GM12878 (cell line): ENCODE measurements at regions of chr11 and their contacts with region 1.

Region 1: GRCh38 chr11:65540297-65541092 is 15.6 kb downstream of the SCYL1 start:
- DNase-seq: peak; percentile 71
- ATAC-seq: peak; percentile 95
- H3K4me3 ChIP-seq: peak overlapping the region; percentile 72
- H3K27ac ChIP-seq: peak overlapping the region; percentile 61
- H3K4me1 ChIP-seq: peaks cover 6% of the 10 kb centered on the region
- H3K27me3 ChIP-seq: no peaks in the 10 kb centered on the region
- CTCF ChIP-seq: peak; percentile 82 to 91 (median 82)
- EP300 ChIP-seq: no peak
- POLR2A ChIP-seq: peak; percentile 81
- RAD21 ChIP-seq: peak; percentile 74

Region 2: DNA sequence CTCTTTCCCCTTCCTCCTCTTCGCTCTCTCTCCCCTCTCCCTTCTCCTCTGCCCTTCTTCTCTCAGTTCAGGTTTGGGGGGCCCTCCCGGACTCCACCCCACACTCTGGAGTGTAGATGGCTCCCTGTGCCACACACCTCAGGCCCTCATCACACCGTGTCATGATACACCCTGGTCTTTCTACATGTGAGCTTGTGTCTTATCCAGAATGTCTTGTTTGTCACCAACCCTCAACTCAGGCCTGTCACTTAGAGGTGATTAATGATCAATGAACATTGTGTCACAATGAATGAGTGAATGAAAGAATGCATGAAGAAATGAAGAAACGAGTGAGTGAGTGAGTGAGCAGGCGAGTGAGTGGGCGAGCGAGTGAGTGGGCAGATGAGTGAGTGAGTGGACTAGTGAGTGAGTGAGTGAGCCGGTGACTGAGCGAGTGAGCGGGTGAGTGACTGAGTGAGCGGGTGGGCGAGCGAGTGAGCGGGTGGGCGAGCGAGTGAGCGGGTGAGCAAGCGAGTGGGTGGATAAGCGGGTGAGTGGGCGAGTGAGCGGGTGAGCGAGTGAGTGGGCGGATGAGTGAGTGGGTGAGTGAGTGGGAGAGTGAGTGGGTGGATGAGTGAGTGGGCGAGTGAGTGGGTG is 324.9 kb before region 1 on chr11:
- CTCF ChIA-PET with region 1: no interaction called
- POLR2A ChIA-PET with region 1: no interaction called
- RAD21 ChIA-PET with region 1: no interaction called
- SMC1A ChIA-PET with region 1: no interaction called
- in situ Hi-C with region 1: no loop called
- intact Hi-C with region 1: no loop called
- DNase-seq: no peak
- ATAC-seq: no peak
- H3K4me3 ChIP-seq: no peak overlapping the region
- H3K27ac ChIP-seq: no peak overlapping the region
- H3K4me1 ChIP-seq: peaks cover 7% of the 10 kb centered on the region
- H3K27me3 ChIP-seq: no peaks in the 10 kb centered on the region
- CTCF ChIP-seq: no peak
- EP300 ChIP-seq: no peak
- POLR2A ChIP-seq: no peak
- RAD21 ChIP-seq: no peak

Region 3: GRCh38 chr11:65524741-65525545 is 15.6 kb before region 1 on chr11 and contains the start of gene SCYL1:
- CTCF ChIA-PET with region 1: interaction called, 18 read pairs
- POLR2A ChIA-PET with region 1: interaction called, 13 read pairs
- RAD21 ChIA-PET with region 1: interaction called, 6 read pairs
- SMC1A ChIA-PET with region 1: interaction called, 7 read pairs
- in situ Hi-C with region 1: no loop called
- intact Hi-C with region 1: no loop called
- DNase-seq: no peak
- ATAC-seq: peak; percentile 86
- H3K4me3 ChIP-seq: peak within 1 kb of the TSS; percentile 85
- H3K27ac ChIP-seq: peak within 1 kb of the TSS; percentile 54
- H3K4me1 ChIP-seq: peaks cover 25% of the 10 kb centered on the region
- H3K27me3 ChIP-seq: no peaks in the 10 kb centered on the region
- CTCF ChIP-seq: no peak
- EP300 ChIP-seq: no peak
- POLR2A ChIP-seq: peak; percentile 74
- RAD21 ChIP-seq: no peak
- polyA plus RNA-seq, gene SCYL1: 0.80 to 6.3 TPM

Region 4: DNA sequence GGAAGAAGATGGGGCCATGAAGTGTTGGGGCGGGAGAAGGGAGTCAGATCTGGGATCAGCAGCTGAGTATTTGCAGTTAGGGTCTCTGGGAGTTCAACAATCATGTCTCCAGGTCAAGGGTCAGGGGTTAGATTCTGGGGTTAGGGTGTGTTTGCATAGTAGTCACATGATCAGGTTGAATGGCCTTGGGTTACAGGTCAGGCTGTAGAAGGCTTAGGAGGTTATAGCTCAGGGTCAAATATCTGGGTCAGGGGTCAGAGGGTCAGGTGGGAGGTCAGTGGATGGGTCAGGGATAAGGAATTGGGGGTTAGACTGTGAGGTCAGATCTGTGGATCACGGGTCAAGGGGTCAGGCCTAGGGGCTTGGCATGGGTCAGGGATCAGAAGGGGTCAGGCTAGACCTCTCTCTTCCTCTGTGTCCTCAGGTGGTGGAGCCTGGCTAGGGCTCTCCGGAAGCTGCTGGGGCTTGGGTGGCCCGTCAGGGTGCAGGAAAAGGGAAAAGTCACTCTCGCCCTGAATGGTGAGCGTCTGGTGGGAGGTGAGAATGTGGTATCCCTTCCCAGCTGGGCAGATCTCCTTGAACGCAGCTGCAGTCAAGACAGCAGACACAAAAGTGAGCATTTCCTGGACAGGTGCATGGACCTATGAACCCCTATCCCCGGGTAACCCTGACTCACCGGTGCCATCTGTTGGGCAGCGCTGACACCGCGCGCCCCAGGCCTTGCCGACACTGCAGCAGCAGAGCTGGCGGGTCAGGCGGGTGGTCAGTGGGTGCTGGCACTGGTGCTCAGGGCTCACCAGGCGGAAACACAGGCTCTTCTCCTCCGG is 11.3 kb after region 1 on chr11:
- CTCF ChIA-PET with region 1: interaction called, 29 read pairs
- POLR2A ChIA-PET with region 1: interaction called, 3 read pairs
- RAD21 ChIA-PET with region 1: interaction called, 19 read pairs
- SMC1A ChIA-PET with region 1: interaction called, 11 read pairs
- in situ Hi-C with region 1: no loop called
- intact Hi-C with region 1: no loop called
- DNase-seq: no peak
- ATAC-seq: peak; percentile 90
- H3K4me3 ChIP-seq: no peak overlapping the region
- H3K27ac ChIP-seq: no peak overlapping the region
- H3K4me1 ChIP-seq: peaks cover 17% of the 10 kb centered on the region
- H3K27me3 ChIP-seq: no peaks in the 10 kb centered on the region
- CTCF ChIP-seq: peak; percentile 69 to 75 (median 69)
- EP300 ChIP-seq: no peak
- POLR2A ChIP-seq: 0 out of 2 replicates have a peak, but pooled peaks have one; percentile 19
- RAD21 ChIP-seq: peak; percentile 39

Region 5: GRCh38 chr11:65588199-65589054 is 47.9 kb after region 1 on chr11:
- CTCF ChIA-PET with region 1: interaction called, 63 read pairs
- POLR2A ChIA-PET with region 1: interaction called, 8 read pairs
- RAD21 ChIA-PET with region 1: interaction called, 57 read pairs
- SMC1A ChIA-PET with region 1: interaction called, 35 read pairs
- in situ Hi-C with region 1: no loop called
- intact Hi-C with region 1: loop called (anchors 1 kb)
- DNase-seq: peak; percentile 96
- ATAC-seq: peak; percentile 87
- H3K4me3 ChIP-seq: peak overlapping the region; percentile 58; the same call in 1 of the 2 replicates
- H3K27ac ChIP-seq: peak overlapping the region; percentile 97
- H3K4me1 ChIP-seq: peaks cover 45% of the 10 kb centered on the region
- H3K27me3 ChIP-seq: no peaks in the 10 kb centered on the region
- CTCF ChIP-seq: peak; percentile 83 to 91 (median 88)
- EP300 ChIP-seq: peak; percentile 82 to 95
- POLR2A ChIP-seq: peak; percentile 71
- RAD21 ChIP-seq: peak; percentile 86

Region 6: GRCh38 chr11:65606876-65607613 is 66.5 kb after region 1 on chr11:
- CTCF ChIA-PET with region 1: interaction called, 11 read pairs
- POLR2A ChIA-PET with region 1: no interaction called
- RAD21 ChIA-PET with region 1: interaction called, 3 read pairs
- SMC1A ChIA-PET with region 1: no interaction called
- in situ Hi-C with region 1: no loop called
- intact Hi-C with region 1: no loop called
- DNase-seq: no peak
- ATAC-seq: peak; percentile 44
- H3K4me3 ChIP-seq: no peak overlapping the region
- H3K27ac ChIP-seq: no peak overlapping the region
- H3K4me1 ChIP-seq: peaks cover 4% of the 10 kb centered on the region
- H3K27me3 ChIP-seq: no peaks in the 10 kb centered on the region
- CTCF ChIP-seq: no peak
- EP300 ChIP-seq: no peak
- POLR2A ChIP-seq: no peak
- RAD21 ChIP-seq: no peak